ENCODE measurements at regions of chr20 and their contacts with region 1.

Region 1: DNA sequence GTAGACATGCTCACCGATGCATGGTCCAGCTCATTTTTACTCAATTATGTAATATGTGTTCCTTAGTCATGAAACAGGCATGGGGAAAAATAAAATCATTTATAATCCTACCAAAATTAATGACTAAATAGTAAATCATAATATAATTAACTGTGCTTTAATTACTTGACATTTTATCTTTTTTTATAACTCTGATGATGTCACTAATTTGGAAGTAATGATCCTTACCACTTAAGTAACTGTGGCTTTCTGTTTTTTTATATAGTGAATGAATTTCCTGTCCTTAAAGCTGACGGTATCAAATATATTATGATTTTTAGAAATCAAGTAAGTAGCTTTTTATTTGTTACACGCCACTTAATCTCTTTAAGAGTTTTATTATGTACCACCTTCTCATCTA is 32.2 kb downstream of the CSE1L start:
- H3K4me3 ChIP-seq: no peak overlapping the region
- H3K27ac ChIP-seq: no peak overlapping the region
- H3K4me1 ChIP-seq: no peaks in the 10 kb centered on the region
- CTCF ChIP-seq: no peak

Region 2: GRCh38 chr20:48897246-48897994 is 180.9 kb before region 1 on chr20:
- CTCF ChIA-PET with region 1: no interaction called
- POLR2A ChIA-PET with region 1: no interaction called
- H3K4me3 ChIP-seq: no peak overlapping the region
- H3K27ac ChIP-seq: no peak overlapping the region
- H3K4me1 ChIP-seq: no peaks in the 10 kb centered on the region
- CTCF ChIP-seq: no peak

Region 3: GRCh38 chr20:48921151-48921898 is 157.0 kb before region 1 on chr20 and contains the start of gene ARFGEF2:
- CTCF ChIA-PET with region 1: no interaction called
- POLR2A ChIA-PET with region 1: interaction called, 11 read pairs
- H3K4me3 ChIP-seq: peak within 1 kb of the TSS; percentile 86
- H3K27ac ChIP-seq: peak within 1 kb of the TSS; percentile 58; the same call in 1 of the 2 replicates
- H3K4me1 ChIP-seq: peaks cover 4% of the 10 kb centered on the region; the same call in 1 of the 2 replicates
- CTCF ChIP-seq: peak; percentile 66

Region 4: DNA sequence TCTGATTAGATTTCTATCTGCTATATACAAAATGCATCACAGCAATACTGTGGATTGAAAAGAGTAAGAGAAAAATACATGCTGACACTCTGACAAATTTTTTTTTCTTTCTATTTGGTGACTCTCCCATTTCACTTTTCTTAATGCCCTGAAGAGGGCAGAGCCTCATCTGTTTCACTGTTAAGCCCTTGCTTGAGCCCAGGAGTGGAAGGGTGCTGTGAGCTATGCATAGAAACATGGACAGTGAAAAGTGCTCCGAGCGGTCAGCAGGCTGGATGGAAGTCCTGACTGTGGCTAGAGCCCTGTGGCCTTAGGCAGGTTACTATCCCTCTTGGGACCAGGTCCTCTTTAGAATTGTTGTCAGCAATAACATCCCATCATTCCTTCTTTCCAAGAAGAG is 49.6 kb before region 1 on chr20:
- CTCF ChIA-PET with region 1: interaction called, 4 read pairs
- POLR2A ChIA-PET with region 1: interaction called, 13 read pairs
- H3K4me3 ChIP-seq: no peak overlapping the region
- H3K27ac ChIP-seq: no peak overlapping the region
- H3K4me1 ChIP-seq: no peaks in the 10 kb centered on the region; the same call in 1 of the 2 replicates
- CTCF ChIP-seq: no peak